Tibial artery (tissue), 4 donors: ENCODE measurements at regions of chr3 and their contacts with region 1.

Region 1: DNA sequence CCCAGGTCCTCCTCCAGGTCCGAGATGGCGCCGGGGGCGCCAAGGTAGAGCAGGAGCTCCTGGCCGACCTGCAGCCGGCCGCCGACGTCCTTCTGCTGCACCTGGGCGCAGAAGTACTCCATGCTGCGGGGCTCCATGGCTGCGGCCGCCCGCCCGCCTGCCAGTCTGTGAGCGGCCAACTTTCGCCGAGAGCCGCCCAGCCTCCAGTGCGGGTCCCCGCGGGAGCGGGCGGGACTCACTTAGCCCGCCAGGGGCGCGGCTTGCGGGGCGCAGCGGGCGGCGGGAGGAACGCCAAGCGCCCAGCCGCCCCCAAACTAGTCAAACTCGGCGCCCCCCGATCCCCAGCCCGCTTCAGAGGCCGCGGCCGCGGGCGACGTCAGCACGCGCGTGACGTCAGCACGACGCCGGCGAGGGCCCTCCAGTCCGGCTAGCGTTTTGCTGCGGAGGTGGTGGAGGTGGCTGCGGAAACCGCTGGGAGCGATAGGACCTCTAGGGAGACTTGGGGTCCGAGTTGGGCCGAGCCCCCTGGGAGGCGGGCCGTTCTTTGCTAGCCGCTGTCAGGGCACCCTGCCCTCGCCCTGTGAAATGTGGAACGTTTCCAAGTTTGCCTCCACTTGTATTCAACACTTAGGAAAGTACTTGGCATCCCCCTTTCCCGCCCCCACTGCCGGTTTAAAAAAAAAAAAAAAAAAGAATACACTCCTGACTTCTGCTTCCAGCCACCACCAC is at the start of gene CLASP2:
- DNase-seq: peak; percentile 78 to 92
- H3K4me3 ChIP-seq: peak within 1 kb of the TSS; percentile 86 to 90
- H3K27ac ChIP-seq: peak within 1 kb of the TSS; percentile 94 to 99
- H3K4me1 ChIP-seq: peaks cover 0 to 49% (median 11%) of the 10 kb centered on the region in 4 donors
- H3K27me3 ChIP-seq: no peaks in the 10 kb centered on the region
- CTCF ChIP-seq: peak; percentile 9 to 12

Region 2: DNA sequence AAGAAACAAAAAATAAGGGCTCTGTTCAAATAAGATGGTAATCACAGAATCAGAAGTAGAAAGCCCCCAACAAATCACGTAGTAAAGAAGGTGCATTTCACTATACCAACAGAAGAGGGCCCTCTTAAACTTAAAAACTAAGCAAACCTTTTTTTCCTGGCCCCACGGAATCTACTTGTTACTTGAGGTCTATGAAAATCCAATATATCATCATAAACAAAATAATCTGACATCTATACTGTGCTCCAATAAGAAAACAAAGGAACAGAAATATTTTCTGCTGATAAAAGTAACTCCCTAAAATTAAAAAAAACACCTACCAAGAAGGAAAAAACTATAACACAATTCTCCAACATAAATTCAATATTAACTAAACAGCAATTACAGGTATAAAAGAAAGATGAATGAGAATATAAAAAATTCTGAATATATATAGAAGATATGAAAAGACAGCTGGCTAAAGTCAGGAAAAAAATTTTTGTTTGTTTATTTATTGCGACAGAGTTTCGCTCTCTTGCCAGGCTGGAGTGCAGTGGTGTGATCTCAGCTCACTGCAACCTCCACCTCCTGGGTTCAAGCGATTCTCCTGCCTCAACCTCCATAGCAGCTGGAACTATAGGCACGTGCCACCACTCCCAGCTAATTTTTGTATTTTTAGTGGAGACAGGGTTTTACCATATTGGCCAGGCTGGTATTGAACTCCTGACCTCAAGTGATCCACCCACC is 81.7 kb before region 1 on chr3:
- intact Hi-C with region 1: no loop called
- DNase-seq: no peak
- H3K4me3 ChIP-seq: no peak overlapping the region
- H3K27ac ChIP-seq: no peak overlapping the region
- H3K4me1 ChIP-seq: peaks cover 0 to 5% (median 0%) of the 10 kb centered on the region in 4 donors
- H3K27me3 ChIP-seq: no peaks in the 10 kb centered on the region
- CTCF ChIP-seq: peak; percentile 67 to 71

Region 3: GRCh38 chr3:33773637-33774036 is 55.6 kb after region 1 on chr3:
- intact Hi-C with region 1: loop called (anchors 10 kb)
- DNase-seq: no peak
- H3K4me3 ChIP-seq: no peak overlapping the region
- H3K27ac ChIP-seq: no peak overlapping the region
- H3K4me1 ChIP-seq: no peaks in the 10 kb centered on the region
- H3K27me3 ChIP-seq: no peaks in the 10 kb centered on the region
- CTCF ChIP-seq: no peak

Region 4: GRCh38 chr3:33798411-33799201 is 80.6 kb after region 1 on chr3 and contains the start of gene PDCD6IP:
- intact Hi-C with region 1: loop called (anchors 5 kb)
- DNase-seq: peak; percentile 90 to 95
- H3K4me3 ChIP-seq: peak within 1 kb of the TSS; percentile 72 to 88
- H3K27ac ChIP-seq: peak within 1 kb of the TSS; percentile 92 to 95
- H3K4me1 ChIP-seq: peaks cover 0 to 42% (median 22%) of the 10 kb centered on the region in 4 donors
- H3K27me3 ChIP-seq: no peaks in the 10 kb centered on the region
- CTCF ChIP-seq: peak; percentile 8 to 30